Activated CD4-positive, alpha-beta T cell treated with anti-CD3 and anti-CD28 coated beads for 36 hours (primary cell): ENCODE measurements at regions of chr1 and their contacts with region 1.

Region 1: GRCh38 chr1:173867753-173868265 is at the start of gene GAS5:
- DNase-seq: peak; percentile 100
- ATAC-seq: peak; percentile 82
- H3K4me3 Mint-ChIP-seq: peak within 1 kb of the TSS; percentile 91
- H3K27ac Mint-ChIP-seq: peak within 1 kb of the TSS; percentile 97
- H3K4me1 Mint-ChIP-seq: peaks cover 57% of the 10 kb centered on the region
- H3K27me3 Mint-ChIP-seq: no peaks in the 10 kb centered on the region
- total RNA-seq, gene GAS5: 878 to 1,203 TPM

Region 2: DNA sequence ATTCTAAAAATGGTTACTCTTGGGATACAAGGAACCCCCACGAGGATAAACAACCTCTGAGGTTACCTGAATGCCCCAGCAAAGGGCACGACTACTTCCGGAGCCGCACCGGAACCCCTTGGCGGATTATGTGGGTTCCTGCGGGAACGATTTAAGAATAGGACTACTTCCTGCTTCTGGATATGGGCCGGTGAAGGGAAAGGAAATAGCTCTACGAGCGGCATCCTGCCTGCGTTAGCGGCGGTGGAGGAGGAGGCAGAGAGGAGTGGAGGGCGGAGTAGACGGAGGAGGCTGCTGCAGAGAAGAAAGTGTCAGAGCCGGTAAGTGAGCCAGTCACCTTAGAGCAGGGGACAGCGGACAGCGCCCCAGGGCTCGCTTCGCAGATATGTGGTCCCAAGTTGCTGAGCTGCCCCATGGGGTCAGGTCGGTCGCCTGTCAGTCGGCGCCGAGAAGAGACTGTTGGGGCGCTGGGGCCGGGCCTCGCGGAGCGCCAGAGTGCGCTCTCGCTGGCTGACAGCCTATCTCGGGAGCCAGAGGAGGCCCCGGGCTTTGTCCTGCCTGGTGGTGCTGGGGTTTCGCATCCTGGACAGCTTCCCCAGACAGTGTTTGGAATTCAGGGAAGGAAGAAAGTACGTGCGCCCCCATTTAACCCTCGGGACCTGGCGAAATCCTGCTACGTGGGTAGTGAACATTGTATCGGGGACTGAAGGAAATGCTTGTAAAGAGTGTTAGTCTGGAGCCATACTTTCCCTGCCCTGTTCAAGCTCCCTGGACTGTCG is 152.9 kb before region 1 on chr1 and contains the start of gene KLHL20:
- CTCF ChIA-PET with region 1: no interaction called
- POLR2A ChIA-PET with region 1: interaction called, 3 read pairs
- intact Hi-C with region 1: loop called (anchors 1 to 2 kb)
- DNase-seq: peak; percentile 90
- ATAC-seq: peak; percentile 99
- H3K4me3 Mint-ChIP-seq: peak within 1 kb of the TSS; percentile 86
- H3K27ac Mint-ChIP-seq: peak within 1 kb of the TSS; percentile 88
- H3K4me1 Mint-ChIP-seq: peaks cover 24% of the 10 kb centered on the region
- H3K27me3 Mint-ChIP-seq: peaks cover 11% of the 10 kb centered on the region
- total RNA-seq, gene KLHL20: 11.1 to 14.1 TPM

Region 3: GRCh38 chr1:174022080-174022975 is 154.5 kb after region 1 on chr1 and contains the start of gene RC3H1:
- CTCF ChIA-PET with region 1: no interaction called
- POLR2A ChIA-PET with region 1: interaction called, 10 read pairs
- intact Hi-C with region 1: loop called (anchors 1 kb)
- DNase-seq: peak; percentile 96
- ATAC-seq: peak; percentile 91
- H3K4me3 Mint-ChIP-seq: peak within 1 kb of the TSS; percentile 87
- H3K27ac Mint-ChIP-seq: peak within 1 kb of the TSS; percentile 96
- H3K4me1 Mint-ChIP-seq: peaks cover 31% of the 10 kb centered on the region
- H3K27me3 Mint-ChIP-seq: no peaks in the 10 kb centered on the region
- total RNA-seq, gene RC3H1: 27.3 to 37.0 TPM